ENCODE measurements at regions of chr16 and their contacts with region 1.

Region 1: DNA sequence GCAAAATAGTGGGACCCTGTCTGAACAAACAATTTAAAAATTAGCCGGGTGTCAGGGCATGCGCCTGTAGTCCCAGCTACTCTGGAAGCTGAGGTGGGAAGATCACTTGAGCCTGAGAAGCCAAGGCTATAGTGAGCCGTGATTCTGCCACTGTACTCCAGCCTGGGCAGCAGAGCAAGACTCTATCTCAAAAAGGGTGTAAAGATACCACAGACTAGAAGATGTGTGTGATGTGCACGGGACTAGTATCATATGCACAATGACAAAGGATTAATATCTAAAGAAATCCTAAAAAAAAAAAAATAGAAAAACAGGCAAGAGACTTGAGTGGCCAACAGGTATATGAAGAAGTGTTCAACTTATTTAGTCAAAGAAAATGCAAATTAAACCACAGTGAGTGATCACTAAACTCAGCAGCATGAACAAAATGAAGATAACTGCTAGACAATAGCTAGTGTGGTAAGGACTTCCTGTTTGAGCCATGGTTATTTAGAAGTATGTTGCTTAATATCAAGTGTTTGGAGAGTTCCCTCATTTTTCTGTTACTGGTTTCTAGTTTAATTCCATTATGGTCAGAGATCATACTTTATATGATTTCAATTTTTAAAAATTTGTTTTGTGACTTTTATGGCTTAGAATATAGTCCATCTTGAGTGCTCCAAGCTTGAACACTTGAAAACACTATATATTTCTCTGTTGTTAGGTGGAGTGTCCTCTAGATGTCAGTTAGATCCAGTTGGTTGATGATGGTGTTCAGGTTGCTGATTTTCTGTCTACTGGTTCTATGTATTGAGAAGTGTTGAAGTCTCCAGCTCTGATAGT is 14.7 kb upstream of the SLX4 start:
- DNase-seq: peak in 6 of 9 donors; percentile 3 to 50 (median 31)
- ATAC-seq: peak; percentile 91
- H3K4me3 ChIP-seq: no peak overlapping the region
- H3K4me3 Mint-ChIP-seq: peak overlapping the region in 9 of 10 donors; percentile 16 to 64 (median 45)
- H3K27ac ChIP-seq: peak overlapping the region; percentile 6
- H3K27ac Mint-ChIP-seq: peak overlapping the region; percentile 54 to 89 (median 80)
- H3K4me1 ChIP-seq: peaks cover 14 to 20% of the 10 kb centered on the region in 2 donors
- H3K4me1 Mint-ChIP-seq: peaks cover 29 to 49% (median 40%) of the 10 kb centered on the region in 7 donors
- H3K27me3 ChIP-seq: no peaks in the 10 kb centered on the region
- H3K27me3 Mint-ChIP-seq: no peaks in the 10 kb centered on the region

Region 2: DNA sequence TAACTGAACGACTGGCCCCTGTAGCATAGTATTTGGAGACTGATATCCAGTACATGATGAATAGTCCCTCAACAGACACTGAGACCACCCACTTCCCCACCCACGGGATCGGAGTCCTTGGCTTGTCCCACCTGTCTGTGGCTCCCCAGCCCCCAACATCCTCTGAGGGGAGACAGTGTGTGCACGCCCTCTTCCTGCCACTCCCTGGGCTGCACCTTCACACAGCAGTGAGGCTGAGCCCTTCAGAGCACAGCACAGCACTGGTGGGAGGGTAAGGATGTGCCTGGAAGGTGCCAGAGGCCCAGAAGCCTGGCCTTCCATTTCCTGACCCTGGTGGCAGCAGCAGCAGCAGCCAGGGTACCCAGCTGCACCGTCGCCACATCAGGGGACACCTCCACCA is 39.4 kb after region 1 on chr16:
- CTCF ChIA-PET with region 1: no interaction called
- POLR2A ChIA-PET with region 1: interaction called, 3 read pairs
- intact Hi-C with region 1: loop called (anchors 1 to 5 kb)
- DNase-seq: peak in 7 of 9 donors; percentile 19 to 53 (median 51)
- ATAC-seq: peak; percentile 80
- H3K4me3 ChIP-seq: no peak overlapping the region
- H3K4me3 Mint-ChIP-seq: peak overlapping the region in 3 of 10 donors; percentile 11 to 13 (median 12)
- H3K27ac ChIP-seq: peak overlapping the region; percentile 36
- H3K27ac Mint-ChIP-seq: peak overlapping the region; percentile 55 to 87 (median 73)
- H3K4me1 ChIP-seq: peaks cover 9 to 13% of the 10 kb centered on the region in 2 donors
- H3K4me1 Mint-ChIP-seq: peaks cover 14 to 29% (median 19%) of the 10 kb centered on the region in 7 donors
- H3K27me3 ChIP-seq: no peaks in the 10 kb centered on the region
- H3K27me3 Mint-ChIP-seq: no peaks in the 10 kb centered on the region

Region 3: GRCh38 chr16:3717235-3718018 is 91.3 kb after region 1 on chr16 and contains the start of gene TRAP1:
- CTCF ChIA-PET with region 1: no interaction called
- POLR2A ChIA-PET with region 1: no interaction called
- intact Hi-C with region 1: loop called in 1 of 2 experiments (anchors 1 kb)
- DNase-seq: peak; percentile 81 to 96 (median 88)
- ATAC-seq: peak; percentile 98
- H3K4me3 ChIP-seq: peak within 1 kb of the TSS; percentile 67
- H3K4me3 Mint-ChIP-seq: peak within 1 kb of the TSS; percentile 81 to 94 (median 89)
- H3K27ac ChIP-seq: peak within 1 kb of the TSS; percentile 94
- H3K27ac Mint-ChIP-seq: peak within 1 kb of the TSS; percentile 67 to 96 (median 92)
- H3K4me1 ChIP-seq: peaks cover 6 to 11% of the 10 kb centered on the region in 2 donors
- H3K4me1 Mint-ChIP-seq: peaks cover 14 to 47% (median 38%) of the 10 kb centered on the region in 7 donors
- H3K27me3 ChIP-seq: no peaks in the 10 kb centered on the region
- H3K27me3 Mint-ChIP-seq: no peaks in the 10 kb centered on the region
- total RNA-seq, gene TRAP1: 96.8 to 138 (median 132) TPM

Region 4: GRCh38 chr16:3971261-3971660 is 345.1 kb after region 1 on chr16:
- CTCF ChIA-PET with region 1: no interaction called
- POLR2A ChIA-PET with region 1: no interaction called
- intact Hi-C with region 1: no loop called
- DNase-seq: no peak
- ATAC-seq: no peak
- H3K4me3 ChIP-seq: no peak overlapping the region
- H3K4me3 Mint-ChIP-seq: no peak overlapping the region
- H3K27ac ChIP-seq: no peak overlapping the region
- H3K27ac Mint-ChIP-seq: no peak overlapping the region
- H3K4me1 ChIP-seq: no peaks in the 10 kb centered on the region
- H3K4me1 Mint-ChIP-seq: no peaks in the 10 kb centered on the region
- H3K27me3 ChIP-seq: no peaks in the 10 kb centered on the region
- H3K27me3 Mint-ChIP-seq: no peaks in the 10 kb centered on the region